ENCODE measurements at regions of chr3 and their contacts with region 1.

Region 1: GRCh38 chr3:32143849-32144757 is 37.7 kb downstream of the GPD1L start:
- DNase-seq: peak in 2 of 5 donors; percentile 45 to 60
- ATAC-seq: peak; percentile 77 to 83 (median 78)
- H3K4me3 ChIP-seq: no peak overlapping the region
- H3K27ac ChIP-seq: no peak overlapping the region
- H3K4me1 ChIP-seq: peaks cover 0 to 27% (median 5%) of the 10 kb centered on the region in 12 donors
- H3K27me3 ChIP-seq: no peaks in the 10 kb centered on the region
- CTCF ChIP-seq: peak; percentile 70 to 90 (median 81)
- POLR2A ChIP-seq: no peak

Region 2: GRCh38 chr3:31610700-31611275 is 533.3 kb before region 1 on chr3:
- intact Hi-C with region 1: loop called in 3 of 10 experiments (anchors 5 to 10 kb)
- DNase-seq: no peak
- ATAC-seq: peak in 1 of 4 donors; percentile 42
- H3K4me3 ChIP-seq: no peak overlapping the region
- H3K27ac ChIP-seq: no peak overlapping the region
- H3K4me1 ChIP-seq: peaks cover 0 to 6% (median 0%) of the 10 kb centered on the region in 12 donors
- H3K27me3 ChIP-seq: no peaks in the 10 kb centered on the region
- CTCF ChIP-seq: peak; percentile 34 to 70 (median 50)
- POLR2A ChIP-seq: no peak

Region 3: DNA sequence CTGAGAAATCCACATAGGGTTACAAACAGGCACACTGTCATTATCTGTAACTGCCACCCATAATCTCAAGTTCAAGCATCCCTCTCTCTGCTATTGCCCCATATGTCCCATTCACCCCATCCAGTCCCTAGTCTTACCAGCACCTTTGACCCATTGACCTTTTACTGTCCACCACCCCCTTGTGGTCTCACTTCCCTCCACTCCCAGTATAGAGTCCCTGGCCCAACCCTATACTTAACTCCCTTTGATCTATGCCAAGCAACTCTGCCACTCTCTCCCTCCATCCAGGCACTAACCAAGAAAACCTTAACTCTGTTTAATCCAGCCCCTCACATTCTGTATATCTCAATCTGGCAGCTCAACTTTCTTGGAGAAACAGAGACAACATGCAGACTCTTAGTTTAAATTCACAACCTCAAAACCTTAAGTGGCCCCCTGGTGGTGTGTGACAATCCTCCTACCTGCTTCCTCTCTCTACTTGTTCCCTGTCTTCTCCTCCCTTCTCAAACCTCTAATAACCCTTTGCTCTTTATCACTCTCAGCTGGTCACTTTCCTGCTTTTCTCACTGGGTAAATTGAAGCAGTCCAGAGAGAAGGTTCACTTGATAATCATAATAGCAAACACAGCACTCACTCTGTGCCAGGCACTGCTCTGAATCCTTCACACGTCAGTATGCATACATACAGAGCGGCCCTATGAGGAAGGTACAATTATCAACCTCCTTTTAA is 448.7 kb before region 1 on chr3:
- intact Hi-C with region 1: loop called in 1 of 10 experiments (anchors 10 kb)
- DNase-seq: no peak
- ATAC-seq: no peak
- H3K4me3 ChIP-seq: no peak overlapping the region
- H3K27ac ChIP-seq: no peak overlapping the region
- H3K4me1 ChIP-seq: peaks cover 0 to 5% (median 0%) of the 10 kb centered on the region in 12 donors
- H3K27me3 ChIP-seq: no peaks in the 10 kb centered on the region
- CTCF ChIP-seq: peak in 6 of 12 donors; percentile 10 to 35 (median 21)
- POLR2A ChIP-seq: no peak

Region 4: DNA sequence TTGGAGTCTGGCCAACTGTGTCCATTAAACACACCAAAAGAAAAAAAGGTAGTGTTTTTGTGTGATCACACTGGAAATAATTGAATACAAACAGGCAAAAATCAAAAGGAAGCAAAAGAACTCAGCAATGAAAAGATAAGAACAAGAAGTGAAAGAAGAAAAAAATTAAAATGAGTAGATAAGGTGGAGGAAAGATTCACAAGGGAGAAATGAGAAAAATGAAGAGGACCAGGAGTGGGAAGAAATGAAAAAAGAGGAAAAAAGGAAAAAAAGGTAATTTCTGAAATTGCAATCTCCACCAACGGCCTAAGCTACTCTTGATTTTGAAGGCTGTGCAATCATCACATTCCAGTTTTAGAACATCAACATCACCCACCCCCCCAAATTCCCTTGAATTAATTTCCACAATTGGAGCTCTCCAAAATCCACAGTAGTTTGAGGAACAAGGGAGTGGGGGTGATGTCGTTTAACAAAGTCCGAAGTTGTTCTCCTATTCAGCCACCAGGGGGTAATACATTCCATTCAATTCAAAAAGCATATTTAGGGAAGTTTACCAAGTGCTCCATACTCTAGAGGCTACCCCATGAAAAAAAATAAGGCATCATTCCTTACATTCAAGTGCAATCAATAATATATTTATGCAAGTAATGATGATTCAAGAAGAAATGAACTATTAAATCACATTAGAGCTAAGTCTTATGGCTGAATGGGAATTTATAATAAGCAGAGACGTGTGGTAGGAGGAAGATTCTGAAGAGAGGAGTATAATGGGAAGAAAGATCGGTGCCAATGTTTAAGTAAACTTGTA is 125.1 kb before region 1 on chr3:
- intact Hi-C with region 1: loop called (anchors 1 to 2 kb)
- DNase-seq: no peak
- ATAC-seq: peak; percentile 15 to 89 (median 79)
- H3K4me3 ChIP-seq: no peak overlapping the region
- H3K27ac ChIP-seq: no peak overlapping the region
- H3K4me1 ChIP-seq: peaks cover 0 to 2% (median 0%) of the 10 kb centered on the region in 12 donors
- H3K27me3 ChIP-seq: no peaks in the 10 kb centered on the region
- CTCF ChIP-seq: peak; percentile 64 to 82 (median 75)
- POLR2A ChIP-seq: no peak

Region 5: GRCh38 chr3:32082721-32083120 is 61.4 kb before region 1 on chr3:
- intact Hi-C with region 1: loop called in 1 of 10 experiments (anchors 10 kb)
- DNase-seq: no peak
- ATAC-seq: peak in 1 of 4 donors; percentile 37
- H3K4me3 ChIP-seq: no peak overlapping the region
- H3K27ac ChIP-seq: peak overlapping the region in 3 of 12 donors; percentile 1 to 53 (median 44)
- H3K4me1 ChIP-seq: peaks cover 0 to 22% (median 0%) of the 10 kb centered on the region in 12 donors
- H3K27me3 ChIP-seq: no peaks in the 10 kb centered on the region
- CTCF ChIP-seq: peak in 1 of 12 donors; percentile 6
- POLR2A ChIP-seq: no peak

Region 6: GRCh38 chr3:32106280-32106928 is 37.7 kb before region 1 on chr3 and contains the start of gene GPD1L:
- intact Hi-C with region 1: loop called in 3 of 10 experiments (anchors 5 kb)
- DNase-seq: peak; percentile 95 to 98 (median 96)
- ATAC-seq: peak; percentile 92 to 97 (median 96)
- H3K4me3 ChIP-seq: peak within 1 kb of the TSS; percentile 55 to 99 (median 87)
- H3K27ac ChIP-seq: peak within 1 kb of the TSS; percentile 82 to 95 (median 88)
- H3K4me1 ChIP-seq: peaks cover 6 to 49% (median 38%) of the 10 kb centered on the region in 12 donors
- H3K27me3 ChIP-seq: no peaks in the 10 kb centered on the region
- CTCF ChIP-seq: peak in 1 of 12 donors; percentile 7
- POLR2A ChIP-seq: peak; percentile 19 to 76
- total RNA-seq, gene GPD1L: 123 to 340 (median 173) TPM

Measured in heart left ventricle (tissue), 16 donors.